HEK293T (cell line): ENCODE measurements at regions of chrX and their contacts with region 1.

Region 1: DNA sequence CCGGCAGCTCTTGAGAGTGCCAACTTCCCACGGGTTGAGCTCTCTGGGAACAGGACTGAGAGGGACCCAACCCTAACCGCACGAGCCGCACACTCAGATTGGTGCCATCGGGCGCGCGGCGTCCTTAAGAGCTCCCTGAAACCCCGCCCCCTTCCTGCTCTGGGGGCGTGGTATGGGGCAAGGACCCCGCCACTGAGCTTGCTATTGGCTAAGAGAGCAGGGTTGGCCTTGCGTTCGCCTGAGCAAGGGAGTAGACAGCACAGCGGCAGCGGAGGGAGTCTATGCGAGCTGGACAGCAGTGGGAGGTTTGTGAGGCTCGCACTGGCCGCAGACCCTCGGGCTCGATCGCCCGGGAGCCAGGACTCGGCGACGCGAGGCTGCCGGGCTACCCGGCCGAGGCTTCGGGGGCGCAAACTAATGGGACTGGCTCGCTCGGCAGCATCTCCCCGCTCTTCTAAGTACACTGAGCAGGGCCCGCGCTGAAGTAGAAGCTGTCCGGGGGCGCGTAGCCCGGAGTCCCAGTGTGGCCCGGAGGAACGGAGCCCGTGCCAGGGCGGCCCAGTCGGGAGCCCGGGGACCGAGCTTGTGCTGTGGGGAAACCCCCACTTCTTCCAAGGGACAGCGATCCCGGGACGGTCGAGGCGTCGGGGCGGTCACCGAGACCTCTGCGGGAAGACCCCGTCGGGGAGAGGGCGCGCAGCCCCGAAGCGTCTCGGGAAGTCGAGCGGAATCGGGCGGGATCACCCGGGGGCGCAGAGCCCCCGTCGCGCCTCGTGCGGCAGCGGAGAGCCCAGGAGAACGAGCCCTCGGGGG is at the start of gene EFNB1:
- DNase-seq: peak; percentile 85

Region 2: GRCh38 chrX:68784816-68785215 is 44.1 kb before region 1 on chrX:
- CTCF ChIA-PET with region 1: no interaction called
- POLR2A ChIA-PET with region 1: no interaction called
- DNase-seq: no peak

Region 3: GRCh38 chrX:68846536-68846935 is 17.6 kb after region 1 on chrX:
- CTCF ChIA-PET with region 1: interaction called, 13 read pairs
- POLR2A ChIA-PET with region 1: interaction called, 4 read pairs
- DNase-seq: no peak

Region 4: GRCh38 chrX:69077895-69078455 is 249.0 kb after region 1 on chrX:
- CTCF ChIA-PET with region 1: no interaction called
- POLR2A ChIA-PET with region 1: interaction called, 12 read pairs
- DNase-seq: no peak

Region 5: DNA sequence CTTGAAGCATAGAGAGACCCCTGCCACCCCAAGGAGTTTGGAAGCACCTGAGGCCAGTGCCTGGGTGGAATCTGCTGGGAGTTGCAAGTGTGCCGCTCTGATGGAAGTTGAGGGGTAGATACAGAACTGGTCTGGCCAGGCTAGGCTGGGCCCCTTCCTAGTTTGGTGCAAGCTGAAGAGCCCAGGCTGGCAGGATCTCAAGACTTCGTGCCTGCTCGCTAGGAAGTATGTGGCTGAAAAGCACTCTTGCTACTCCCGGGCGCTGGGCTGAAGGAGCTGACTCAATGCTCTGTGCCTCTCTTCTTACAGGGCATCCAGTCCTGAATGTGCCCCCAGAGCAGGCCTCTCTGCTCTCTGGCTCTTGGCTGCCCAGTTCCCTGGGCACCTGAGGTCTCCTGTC is 388.0 kb after region 1 on chrX:
- CTCF ChIA-PET with region 1: interaction called, 54 read pairs
- POLR2A ChIA-PET with region 1: interaction called, 20 read pairs
- DNase-seq: no peak

Region 6: GRCh38 chrX:69285401-69285877 is 456.5 kb after region 1 on chrX:
- CTCF ChIA-PET with region 1: interaction called, 15 read pairs
- POLR2A ChIA-PET with region 1: interaction called, 11 read pairs
- DNase-seq: no peak

Region 7: DNA sequence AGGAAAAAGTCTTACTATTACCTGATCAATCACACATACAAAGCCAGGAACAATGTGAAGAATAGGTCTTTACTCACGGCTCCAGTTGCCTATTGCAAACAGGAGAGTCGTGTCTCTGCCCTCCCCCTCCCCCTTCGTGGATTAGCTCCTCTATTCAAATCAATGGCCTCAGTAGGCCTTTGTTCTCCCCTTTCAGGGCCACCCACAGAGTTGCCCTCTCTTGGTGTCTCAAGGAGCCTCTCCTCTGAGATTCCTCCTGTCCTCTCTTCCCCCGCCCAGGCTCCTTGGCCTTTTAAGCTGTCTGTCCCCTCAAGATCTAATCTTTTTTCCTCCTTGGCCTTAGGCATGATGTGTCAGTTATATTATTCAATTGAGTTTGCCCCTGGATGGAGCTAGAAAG is 568.0 kb after region 1 on chrX:
- CTCF ChIA-PET with region 1: interaction called, 11 read pairs
- POLR2A ChIA-PET with region 1: no interaction called
- DNase-seq: no peak